ENCODE measurements at regions of chr2 and their contacts with region 1.

Region 1: GRCh38 chr2:127810619-127811396 is at the start of gene WDR33:
- DNase-seq: peak; percentile 84 to 94 (median 93)
- ATAC-seq: peak; percentile 97
- H3K4me3 ChIP-seq: peak within 1 kb of the TSS; percentile 79
- H3K4me3 Mint-ChIP-seq: peak within 1 kb of the TSS; percentile 91 to 100 (median 96)
- H3K27ac ChIP-seq: peak within 1 kb of the TSS; percentile 98
- H3K27ac Mint-ChIP-seq: peak within 1 kb of the TSS; percentile 94 to 100 (median 99)
- H3K4me1 ChIP-seq: peaks cover 17 to 24% of the 10 kb centered on the region in 2 donors
- H3K4me1 Mint-ChIP-seq: peaks cover 33 to 62% (median 51%) of the 10 kb centered on the region in 7 donors
- H3K27me3 ChIP-seq: no peaks in the 10 kb centered on the region
- H3K27me3 Mint-ChIP-seq: peaks cover 0 to 12% (median 0%) of the 10 kb centered on the region in 5 donors
- total RNA-seq, gene WDR33: 62.6 to 98.7 (median 72.3) TPM

Region 2: GRCh38 chr2:126600742-126601141 is 1210.1 kb before region 1 on chr2:
- CTCF ChIA-PET with region 1: no interaction called
- POLR2A ChIA-PET with region 1: no interaction called
- intact Hi-C with region 1: no loop called
- DNase-seq: no peak
- ATAC-seq: no peak
- H3K4me3 ChIP-seq: no peak overlapping the region
- H3K4me3 Mint-ChIP-seq: no peak overlapping the region
- H3K27ac ChIP-seq: no peak overlapping the region
- H3K27ac Mint-ChIP-seq: no peak overlapping the region
- H3K4me1 ChIP-seq: no peaks in the 10 kb centered on the region
- H3K4me1 Mint-ChIP-seq: no peaks in the 10 kb centered on the region
- H3K27me3 ChIP-seq: no peaks in the 10 kb centered on the region
- H3K27me3 Mint-ChIP-seq: peaks cover 0 to 12% (median 0%) of the 10 kb centered on the region in 5 donors

Region 3: GRCh38 chr2:127283275-127283674 is 527.5 kb before region 1 on chr2:
- CTCF ChIA-PET with region 1: no interaction called
- POLR2A ChIA-PET with region 1: no interaction called
- intact Hi-C with region 1: no loop called
- DNase-seq: no peak
- ATAC-seq: no peak
- H3K4me3 ChIP-seq: no peak overlapping the region
- H3K4me3 Mint-ChIP-seq: no peak overlapping the region
- H3K27ac ChIP-seq: no peak overlapping the region
- H3K27ac Mint-ChIP-seq: peak overlapping the region in 3 of 9 donors; percentile 38 to 62 (median 52)
- H3K4me1 ChIP-seq: no peaks in the 10 kb centered on the region
- H3K4me1 Mint-ChIP-seq: peaks cover 10 to 42% (median 29%) of the 10 kb centered on the region in 7 donors
- H3K27me3 ChIP-seq: no peaks in the 10 kb centered on the region
- H3K27me3 Mint-ChIP-seq: no peaks in the 10 kb centered on the region

Region 4: DNA sequence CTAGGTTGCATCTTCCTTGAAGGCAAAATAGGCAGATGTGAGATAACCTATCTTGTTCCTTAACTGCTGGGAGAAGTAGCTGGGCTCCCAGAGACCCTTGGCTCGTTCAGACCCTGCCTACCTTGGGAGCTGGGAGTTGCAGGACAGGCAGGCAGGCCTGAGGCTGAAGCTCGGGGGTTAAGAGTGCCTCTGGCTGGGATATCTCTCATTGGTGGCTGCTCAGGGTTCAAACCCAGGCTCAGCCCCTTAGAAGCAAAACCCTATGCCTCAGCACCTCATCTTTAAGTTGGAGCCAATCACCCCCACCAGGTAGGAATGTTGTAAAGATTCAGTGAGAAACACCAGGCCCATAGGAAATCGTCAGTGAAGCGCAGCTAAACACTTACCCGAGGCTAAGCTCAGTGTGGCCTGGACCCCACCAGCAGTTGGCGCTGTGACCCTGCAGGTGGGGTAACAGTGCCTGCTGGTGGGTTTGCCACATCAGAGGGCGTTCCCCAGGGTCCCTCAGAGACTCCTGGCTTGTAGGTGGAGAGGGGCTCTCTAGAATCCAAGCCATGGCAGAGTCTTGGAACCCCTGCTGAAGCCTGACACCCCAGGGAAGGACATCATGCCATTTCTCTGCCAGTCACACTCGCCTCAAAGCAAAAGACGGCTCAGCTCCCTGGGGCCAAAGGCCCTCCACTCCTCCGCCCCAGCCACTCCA is 219.4 kb before region 1 on chr2:
- CTCF ChIA-PET with region 1: interaction called, 3 read pairs
- POLR2A ChIA-PET with region 1: no interaction called
- intact Hi-C with region 1: loop called in 1 of 2 experiments (anchors 1 kb)
- DNase-seq: peak; percentile 42 to 79 (median 67)
- ATAC-seq: peak; percentile 92
- H3K4me3 ChIP-seq: no peak overlapping the region
- H3K4me3 Mint-ChIP-seq: no peak overlapping the region
- H3K27ac ChIP-seq: no peak overlapping the region
- H3K27ac Mint-ChIP-seq: peak overlapping the region in 5 of 9 donors; percentile 18 to 69 (median 36)
- H3K4me1 ChIP-seq: no peaks in the 10 kb centered on the region
- H3K4me1 Mint-ChIP-seq: peaks cover 0 to 17% (median 4%) of the 10 kb centered on the region in 7 donors
- H3K27me3 ChIP-seq: no peaks in the 10 kb centered on the region
- H3K27me3 Mint-ChIP-seq: no peaks in the 10 kb centered on the region

Region 5: GRCh38 chr2:127829845-127830246 is 19.0 kb after region 1 on chr2:
- CTCF ChIA-PET with region 1: no interaction called
- POLR2A ChIA-PET with region 1: interaction called, 16 read pairs
- intact Hi-C with region 1: loop called (anchors 1 kb)
- DNase-seq: peak in 8 of 9 donors; percentile 46 to 76 (median 66)
- ATAC-seq: peak; percentile 96
- H3K4me3 ChIP-seq: no peak overlapping the region
- H3K4me3 Mint-ChIP-seq: peak overlapping the region; percentile 3 to 60 (median 50)
- H3K27ac ChIP-seq: peak overlapping the region; percentile 65
- H3K27ac Mint-ChIP-seq: peak overlapping the region; percentile 46 to 92 (median 73)
- H3K4me1 ChIP-seq: peaks cover 18 to 22% of the 10 kb centered on the region in 2 donors
- H3K4me1 Mint-ChIP-seq: peaks cover 14 to 29% (median 24%) of the 10 kb centered on the region in 7 donors
- H3K27me3 ChIP-seq: no peaks in the 10 kb centered on the region
- H3K27me3 Mint-ChIP-seq: no peaks in the 10 kb centered on the region

Region 6: DNA sequence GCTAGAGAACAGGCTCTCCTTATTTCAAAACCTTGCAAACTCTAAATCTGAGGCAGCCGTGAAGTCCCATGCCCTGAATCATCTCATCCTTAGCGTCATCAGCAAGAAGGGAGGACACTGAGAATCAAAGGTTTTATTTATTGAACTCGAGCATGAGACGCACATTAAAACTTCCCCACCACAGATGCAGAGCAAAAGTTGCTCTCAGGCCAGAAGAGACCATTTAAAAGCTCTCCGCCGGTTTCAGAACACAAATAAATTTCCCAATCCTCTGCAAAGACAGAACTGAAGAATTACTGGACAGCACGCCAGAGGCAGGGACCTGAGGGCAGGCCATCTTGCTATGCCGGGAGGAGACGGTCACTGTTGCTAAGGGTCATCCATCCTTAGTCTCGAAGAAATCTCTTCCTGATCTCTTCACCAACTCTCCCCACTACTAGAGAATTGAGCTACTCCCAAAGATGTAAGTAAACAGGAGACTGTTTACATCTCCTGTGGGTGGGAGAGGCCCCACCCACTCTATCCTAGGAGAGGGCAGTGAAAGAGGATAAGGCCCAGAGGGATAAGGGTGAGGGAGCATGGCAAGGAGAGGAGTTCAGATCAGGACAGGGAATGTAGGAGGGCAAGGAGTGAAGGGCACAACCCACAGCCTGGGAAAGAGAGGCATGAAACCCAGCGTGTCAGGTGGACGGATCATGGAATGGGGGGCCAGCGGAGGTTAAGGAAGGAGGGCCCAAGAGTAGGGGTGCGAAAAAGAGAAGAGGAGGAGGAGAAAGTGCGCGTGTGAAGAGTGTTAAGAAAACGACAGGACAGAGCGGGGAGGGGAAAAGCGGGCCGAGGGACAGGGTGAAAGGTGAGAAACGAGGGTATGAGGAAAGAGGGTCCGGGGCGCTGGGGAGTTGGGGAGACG is 73.9 kb after region 1 on chr2:
- CTCF ChIA-PET with region 1: no interaction called
- POLR2A ChIA-PET with region 1: interaction called, 3 read pairs
- intact Hi-C with region 1: loop called in 1 of 2 experiments (anchors 2 kb)
- DNase-seq: peak in 1 of 9 donors; percentile 7
- ATAC-seq: no peak
- H3K4me3 ChIP-seq: peak overlapping the region; percentile 43
- H3K4me3 Mint-ChIP-seq: peak overlapping the region; percentile 78 to 100 (median 92)
- H3K27ac ChIP-seq: peak overlapping the region; percentile 55
- H3K27ac Mint-ChIP-seq: peak overlapping the region; percentile 75 to 94 (median 89)
- H3K4me1 ChIP-seq: peaks cover 15 to 24% of the 10 kb centered on the region in 2 donors
- H3K4me1 Mint-ChIP-seq: peaks cover 36 to 73% (median 66%) of the 10 kb centered on the region in 7 donors
- H3K27me3 ChIP-seq: no peaks in the 10 kb centered on the region
- H3K27me3 Mint-ChIP-seq: no peaks in the 10 kb centered on the region

Region 7: GRCh38 chr2:128090945-128091725 is 280.3 kb after region 1 on chr2 and contains the start of gene UGGT1:
- CTCF ChIA-PET with region 1: no interaction called
- POLR2A ChIA-PET with region 1: interaction called, 3 read pairs
- intact Hi-C with region 1: loop called in 1 of 2 experiments (anchors 2 kb)
- DNase-seq: peak; percentile 75 to 94 (median 92)
- ATAC-seq: peak; percentile 99
- H3K4me3 ChIP-seq: peak within 1 kb of the TSS; percentile 86
- H3K4me3 Mint-ChIP-seq: peak within 1 kb of the TSS; percentile 88 to 98 (median 94)
- H3K27ac ChIP-seq: peak within 1 kb of the TSS; percentile 75
- H3K27ac Mint-ChIP-seq: peak within 1 kb of the TSS; percentile 91 to 97 (median 94)
- H3K4me1 ChIP-seq: peaks cover 13 to 18% of the 10 kb centered on the region in 2 donors
- H3K4me1 Mint-ChIP-seq: peaks cover 27 to 60% (median 56%) of the 10 kb centered on the region in 7 donors
- H3K27me3 ChIP-seq: no peaks in the 10 kb centered on the region
- H3K27me3 Mint-ChIP-seq: no peaks in the 10 kb centered on the region
- total RNA-seq, gene UGGT1: 38.1 to 75.6 (median 46.6) TPM

Measured in naive thymus-derived CD4-positive, alpha-beta T cell (primary cell).